Dendritic cell treated with granulocyte-macrophage colony-stimulating factor and Interleukin-4, amounts not matched to agents 40 ng/mL and 50 ng/mL, for 4 days (primary cell): ENCODE measurements at regions of chr17 and their contacts with region 1.

Region 1: GRCh38 chr17:55717898-55718735 is 4.5 kb downstream of the TMEM100 start:
- H3K4me3 Mint-ChIP-seq: no peak overlapping the region
- H3K27ac Mint-ChIP-seq: no peak overlapping the region
- H3K4me1 Mint-ChIP-seq: peaks cover 13% of the 10 kb centered on the region
- H3K27me3 Mint-ChIP-seq: peaks cover 18% of the 10 kb centered on the region

Region 2: GRCh38 chr17:55652114-55652823 is 65.8 kb before region 1 on chr17:
- intact Hi-C with region 1: loop called (anchors 5 kb)
- H3K4me3 Mint-ChIP-seq: no peak overlapping the region
- H3K27ac Mint-ChIP-seq: no peak overlapping the region
- H3K4me1 Mint-ChIP-seq: peaks cover 19% of the 10 kb centered on the region
- H3K27me3 Mint-ChIP-seq: peaks cover 4% of the 10 kb centered on the region